Dorsolateral prefrontal cortex (tissue), 120 donors: ENCODE measurements at regions of chr14 and their contacts with region 1.

Region 1: DNA sequence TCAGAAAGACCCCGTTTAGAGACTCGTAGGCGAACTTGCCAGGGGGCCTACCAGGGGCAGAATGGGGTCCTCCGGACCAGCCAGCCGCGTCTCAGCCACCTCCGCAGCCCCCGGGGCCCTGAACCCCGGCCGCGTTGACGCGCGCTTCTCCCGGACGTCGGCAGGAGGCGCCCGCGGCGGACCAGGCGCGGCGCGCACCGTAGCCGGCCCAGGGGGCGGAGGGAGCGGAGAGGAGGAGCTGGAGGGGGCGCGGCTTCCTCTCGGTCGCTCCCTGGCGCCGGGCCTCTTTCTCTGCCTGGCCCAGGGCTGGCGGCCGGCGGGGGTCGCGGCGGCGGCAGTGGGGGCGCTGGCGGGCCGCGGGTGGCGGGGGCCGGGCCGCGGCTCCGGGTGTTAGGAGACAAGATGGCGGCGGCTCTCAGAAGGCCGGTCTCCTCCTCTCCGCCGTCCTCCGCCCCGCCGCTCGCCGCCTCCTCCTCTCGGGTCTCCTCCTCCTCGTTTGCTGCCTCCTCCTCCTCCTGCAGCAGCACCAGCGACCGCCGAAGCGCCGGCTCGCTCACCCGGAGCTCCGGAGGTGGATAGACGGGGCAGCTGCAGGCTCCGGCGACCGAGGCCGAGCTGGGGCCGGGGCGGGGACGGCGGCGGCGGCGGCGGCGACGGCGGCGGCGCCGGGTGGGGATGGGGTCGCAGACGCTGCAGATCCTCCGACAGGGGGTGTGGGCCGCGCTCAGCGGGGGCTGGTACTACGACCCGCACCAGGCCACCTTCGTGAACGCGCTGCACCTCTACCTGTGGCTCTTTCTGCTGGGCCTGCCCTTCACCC is at the start of gene PCNX1:
- DNase-seq: peak; percentile 69 to 89 (median 80)
- H3K4me3 ChIP-seq: peak within 1 kb of the TSS; percentile 56 to 99 (median 90)
- H3K27ac ChIP-seq: peak within 1 kb of the TSS; percentile 63 to 98 (median 91)
- H3K27me3 ChIP-seq: no peaks in the 10 kb centered on the region
- CTCF ChIP-seq: peak; percentile 63 to 96 (median 86)
- total RNA-seq, gene PCNX1: 61.9 to 138 (median 81.6) TPM

Region 2: GRCh38 chr14:70317969-70318634 is 589.3 kb before region 1 on chr14:
- intact Hi-C with region 1: no loop called
- DNase-seq: peak in 5 of 10 donors; percentile 17 to 51 (median 39)
- H3K4me3 ChIP-seq: no peak overlapping the region
- H3K27ac ChIP-seq: no peak overlapping the region
- H3K27me3 ChIP-seq: peaks cover 0 to 7% (median 0%) of the 10 kb centered on the region in 45 donors
- CTCF ChIP-seq: peak in 55 of 56 donors; percentile 37 to 86 (median 67)

Region 3: GRCh38 chr14:70821584-70822529 is 85.5 kb before region 1 on chr14:
- intact Hi-C with region 1: loop called (anchors 2 to 5 kb)
- DNase-seq: peak in 7 of 10 donors; percentile 31 to 84 (median 68)
- H3K4me3 ChIP-seq: peak overlapping the region; percentile 45 to 86 (median 73)
- H3K27ac ChIP-seq: peak overlapping the region in 12 of 59 donors; percentile 2 to 61 (median 30)
- H3K27me3 ChIP-seq: peaks cover 0 to 23% (median 0%) of the 10 kb centered on the region in 45 donors
- CTCF ChIP-seq: peak in 1 of 56 donors; percentile 17

Region 4: DNA sequence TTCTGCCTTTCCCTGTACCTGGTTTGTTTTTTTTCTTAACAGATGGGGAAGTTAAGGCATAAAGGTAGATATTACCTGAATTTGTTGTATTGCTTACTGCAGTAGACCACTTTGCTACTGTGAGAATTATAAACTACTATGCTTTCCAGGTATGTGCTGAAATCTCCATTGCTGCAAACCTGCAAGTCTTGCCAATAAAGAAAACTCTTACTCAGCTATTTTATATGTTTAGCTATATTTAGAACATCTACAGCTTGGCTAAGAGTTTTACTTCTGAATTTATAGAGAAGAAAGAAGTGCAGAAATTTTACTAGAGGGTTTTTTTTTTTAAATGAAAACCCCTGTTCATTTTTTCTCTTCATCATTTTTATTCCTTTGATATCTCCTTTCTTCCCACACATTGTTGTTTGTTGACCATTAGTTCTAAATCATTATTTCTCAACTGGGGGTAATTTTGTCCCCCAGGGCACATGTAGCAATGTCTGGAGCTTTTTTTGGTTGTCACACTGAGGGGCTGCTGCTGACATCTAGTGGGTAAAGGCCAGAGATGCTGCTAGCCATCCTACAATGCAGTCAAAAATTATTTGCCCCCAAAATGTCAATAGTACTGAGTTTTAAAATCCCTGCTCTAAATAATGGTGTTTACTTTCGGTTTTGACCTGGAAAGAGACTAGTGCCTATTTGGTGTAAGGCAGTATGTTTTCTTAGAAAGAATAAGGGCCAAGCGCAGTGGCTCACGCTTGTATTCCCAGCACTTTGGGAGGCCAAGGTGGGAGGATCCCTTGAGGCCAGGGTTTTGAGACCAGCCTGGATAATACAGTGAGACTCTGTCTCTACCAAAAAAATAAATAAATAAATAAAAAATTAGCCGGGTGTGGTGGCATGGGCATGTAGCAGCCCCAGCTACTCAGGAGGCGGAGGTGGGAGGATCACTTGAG is 48.4 kb after region 1 on chr14:
- intact Hi-C with region 1: loop called in 1 of 2 experiments (anchors 5 kb)
- DNase-seq: no peak
- H3K4me3 ChIP-seq: no peak overlapping the region
- H3K27ac ChIP-seq: no peak overlapping the region
- H3K27me3 ChIP-seq: no peaks in the 10 kb centered on the region
- CTCF ChIP-seq: peak in 52 of 56 donors; percentile 11 to 66 (median 49)

Region 5: GRCh38 chr14:70972107-70972976 is 65.0 kb after region 1 on chr14:
- intact Hi-C with region 1: loop called (anchors 2 to 5 kb)
- DNase-seq: peak; percentile 35 to 94 (median 80)
- H3K4me3 ChIP-seq: no peak overlapping the region
- H3K27ac ChIP-seq: peak overlapping the region in 1 of 59 donors; percentile 17
- H3K27me3 ChIP-seq: no peaks in the 10 kb centered on the region
- CTCF ChIP-seq: peak; percentile 86 to 100 (median 94)

Region 6: DNA sequence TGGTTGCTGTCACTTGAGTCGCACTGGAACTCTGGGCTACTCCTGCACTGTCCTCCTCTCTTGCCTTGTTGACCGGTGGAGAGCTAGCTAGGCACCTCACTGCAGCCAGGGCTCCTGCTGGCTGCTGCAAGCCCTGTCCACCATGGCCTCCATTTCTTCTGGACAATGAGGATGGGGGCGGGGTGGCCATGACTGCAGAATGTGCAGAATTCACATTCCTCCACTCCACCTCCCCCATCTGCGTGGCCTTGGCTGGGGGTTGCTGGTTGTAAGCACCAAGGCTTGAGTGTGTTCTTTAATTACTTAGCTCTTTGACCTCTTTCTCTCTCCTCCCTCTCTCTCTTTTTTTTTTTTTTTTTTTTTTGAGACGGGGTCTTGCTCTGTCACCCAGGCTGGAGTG is 248.4 kb after region 1 on chr14:
- intact Hi-C with region 1: no loop called
- DNase-seq: no peak
- H3K4me3 ChIP-seq: no peak overlapping the region
- H3K27ac ChIP-seq: no peak overlapping the region
- H3K27me3 ChIP-seq: no peaks in the 10 kb centered on the region
- CTCF ChIP-seq: no peak